ENCODE measurements at regions of chr5 and their contacts with region 1.

Region 1: DNA sequence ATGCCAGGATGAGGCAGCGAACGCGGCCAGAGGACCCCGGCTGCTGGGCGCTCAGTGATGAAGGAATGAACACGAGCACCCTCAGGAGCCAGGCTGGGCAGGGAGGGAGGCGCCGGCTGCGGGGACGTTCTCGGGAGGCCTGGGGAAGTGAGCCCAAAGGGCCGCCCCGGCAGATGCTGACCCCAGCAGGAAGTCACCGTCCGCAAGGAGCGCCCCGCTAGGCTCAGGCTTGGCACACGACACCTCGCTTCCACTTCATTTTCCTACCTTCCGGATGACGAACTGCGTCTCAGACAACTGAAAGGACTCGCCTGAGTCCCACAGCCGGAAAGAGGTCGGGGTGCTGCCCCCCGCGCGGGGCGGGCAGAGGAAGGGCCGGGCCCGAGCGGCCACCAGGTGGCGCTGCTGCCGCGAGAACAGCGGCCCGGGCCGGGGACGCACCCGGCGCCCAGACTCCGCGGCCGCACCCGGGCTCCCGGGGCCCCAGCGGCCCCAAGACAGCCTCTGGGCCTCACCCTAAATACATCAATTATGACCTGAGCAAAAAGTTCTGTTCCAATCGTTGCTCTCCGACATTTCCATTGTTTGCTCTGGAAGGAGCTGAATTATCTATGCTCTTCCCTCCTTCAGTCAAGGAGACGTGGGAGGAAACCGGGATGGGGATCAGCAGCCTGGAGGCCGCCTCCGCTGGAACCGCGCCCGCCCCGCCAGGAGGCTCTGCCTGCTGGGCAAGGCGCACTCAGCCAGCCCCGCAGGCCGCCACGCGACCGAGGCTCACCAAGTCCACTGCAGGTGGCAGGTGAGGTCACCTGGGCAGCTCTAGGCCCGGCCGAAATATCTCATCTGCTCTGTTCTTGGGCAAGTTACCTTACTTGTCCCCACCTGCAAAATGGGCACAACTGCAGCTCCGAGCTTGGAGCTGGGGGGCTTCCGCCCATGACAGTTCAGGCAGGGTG is 107.0 kb downstream of the ZNF354C start:
- DNase-seq: peak; percentile 25
- H3K4me3 Mint-ChIP-seq: no peak overlapping the region
- H3K27ac Mint-ChIP-seq: no peak overlapping the region
- H3K4me1 Mint-ChIP-seq: no peaks in the 10 kb centered on the region
- H3K27me3 Mint-ChIP-seq: peaks cover 7% of the 10 kb centered on the region

Region 2: GRCh38 chr5:179494774-179495526 is 327.8 kb after region 1 on chr5:
- intact Hi-C with region 1: loop called (anchors 1 kb)
- DNase-seq: no peak
- H3K4me3 Mint-ChIP-seq: no peak overlapping the region
- H3K27ac Mint-ChIP-seq: no peak overlapping the region
- H3K4me1 Mint-ChIP-seq: no peaks in the 10 kb centered on the region
- H3K27me3 Mint-ChIP-seq: peaks cover 8% of the 10 kb centered on the region

Measured in activated T-helper 1 cell treated with anti-CD3 and anti-CD28 coated beads, Interleukin-12 subunit alpha, Interleukin-12 subunit beta, Interleukin-2, Interleukin-4 antibody, amounts not matched to agents 30 ng/mL and 10 ng/mL and 1 ng/mL, durations not matched to agents 14 hours and 24 hours and 36 hours (primary cell).